K562 (cell line): ENCODE measurements at regions of chr19 and their contacts with region 1.

Region 1: DNA sequence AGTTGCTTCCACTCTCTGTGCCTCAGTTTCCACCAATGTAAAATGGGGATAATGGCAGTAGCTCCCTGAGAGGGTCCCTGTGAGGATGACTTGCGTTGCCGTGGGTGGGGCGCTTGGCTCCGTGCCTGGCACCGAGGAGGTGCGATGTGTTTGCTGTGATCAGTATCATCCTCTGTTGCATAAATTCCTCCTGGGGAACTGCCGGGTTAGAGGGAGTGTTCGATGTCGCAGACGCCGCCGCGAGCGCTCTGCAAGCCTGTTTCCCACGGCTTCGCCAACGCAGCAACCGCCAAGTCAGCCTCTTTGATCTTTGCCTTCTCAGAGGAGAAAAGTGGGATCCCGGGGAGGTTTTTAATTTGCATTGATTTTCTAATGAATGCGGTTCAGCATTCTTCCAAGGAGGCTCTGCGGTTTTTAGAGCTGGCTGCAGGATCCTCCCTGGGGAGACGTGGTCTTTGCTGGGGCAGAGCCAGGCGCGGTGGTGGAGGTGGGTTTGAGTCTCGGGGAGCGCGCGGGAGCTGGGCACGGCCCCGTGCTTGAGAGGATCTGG is 7.6 kb downstream of the GPR32 start:
- DNase-seq: peak in 1 of 4 experiments; percentile 55
- ATAC-seq: peak; percentile 59
- H3K4me3 ChIP-seq: 0 out of 2 replicates have a peak overlapping the region, but pooled peaks have one; percentile 4
- H3K27ac ChIP-seq: no peak overlapping the region
- H3K4me1 ChIP-seq: peaks cover 25 to 31% of the 10 kb centered on the region in 2 experiments; a peak in 4 of 5 replicates
- H3K27me3 ChIP-seq: no peaks in the 10 kb centered on the region
- CTCF ChIP-seq: no peak
- EP300 ChIP-seq: no peak
- POLR2A ChIP-seq: no peak
- RAD21 ChIP-seq: no peak

Region 2: GRCh38 chr19:50357178-50358100 is 420.4 kb before region 1 on chr19:
- CTCF ChIA-PET with region 1: no interaction called
- POLR2A ChIA-PET with region 1: no interaction called
- in situ Hi-C with region 1: loop called (anchors 10 kb)
- intact Hi-C with region 1: no loop called
- DNase-seq: peak; percentile 70 to 93 (median 78)
- ATAC-seq: peak; percentile 85
- H3K4me3 ChIP-seq: peak overlapping the region; percentile 43
- H3K27ac ChIP-seq: peak overlapping the region; percentile 95
- H3K4me1 ChIP-seq: peaks cover 36 to 38% of the 10 kb centered on the region in 2 experiments
- H3K27me3 ChIP-seq: no peaks in the 10 kb centered on the region
- CTCF ChIP-seq: peak; percentile 89 to 91 (median 90)
- EP300 ChIP-seq: no peak
- POLR2A ChIP-seq: peak; percentile 3
- RAD21 ChIP-seq: peak; percentile 86 to 91

Region 3: GRCh38 chr19:50537762-50538230 is 240.0 kb before region 1 on chr19:
- CTCF ChIA-PET with region 1: interaction called, 12 read pairs
- POLR2A ChIA-PET with region 1: no interaction called
- in situ Hi-C with region 1: loop called (anchors 5 kb)
- intact Hi-C with region 1: loop called (anchors 1 kb)
- DNase-seq: peak; percentile 87 to 93 (median 88)
- ATAC-seq: peak; percentile 99
- H3K4me3 ChIP-seq: no peak overlapping the region
- H3K27ac ChIP-seq: no peak overlapping the region
- H3K4me1 ChIP-seq: peaks cover 0 to 5% of the 10 kb centered on the region in 2 experiments; a peak in 2 of 5 replicates
- H3K27me3 ChIP-seq: peaks cover 0 to under 1% of the 10 kb centered on the region in 2 experiments; a peak in 1 of 5 replicates
- CTCF ChIP-seq: peak; percentile 97 to 99 (median 98)
- EP300 ChIP-seq: no peak
- POLR2A ChIP-seq: no peak
- RAD21 ChIP-seq: peak; percentile 85 to 96

Region 4: DNA sequence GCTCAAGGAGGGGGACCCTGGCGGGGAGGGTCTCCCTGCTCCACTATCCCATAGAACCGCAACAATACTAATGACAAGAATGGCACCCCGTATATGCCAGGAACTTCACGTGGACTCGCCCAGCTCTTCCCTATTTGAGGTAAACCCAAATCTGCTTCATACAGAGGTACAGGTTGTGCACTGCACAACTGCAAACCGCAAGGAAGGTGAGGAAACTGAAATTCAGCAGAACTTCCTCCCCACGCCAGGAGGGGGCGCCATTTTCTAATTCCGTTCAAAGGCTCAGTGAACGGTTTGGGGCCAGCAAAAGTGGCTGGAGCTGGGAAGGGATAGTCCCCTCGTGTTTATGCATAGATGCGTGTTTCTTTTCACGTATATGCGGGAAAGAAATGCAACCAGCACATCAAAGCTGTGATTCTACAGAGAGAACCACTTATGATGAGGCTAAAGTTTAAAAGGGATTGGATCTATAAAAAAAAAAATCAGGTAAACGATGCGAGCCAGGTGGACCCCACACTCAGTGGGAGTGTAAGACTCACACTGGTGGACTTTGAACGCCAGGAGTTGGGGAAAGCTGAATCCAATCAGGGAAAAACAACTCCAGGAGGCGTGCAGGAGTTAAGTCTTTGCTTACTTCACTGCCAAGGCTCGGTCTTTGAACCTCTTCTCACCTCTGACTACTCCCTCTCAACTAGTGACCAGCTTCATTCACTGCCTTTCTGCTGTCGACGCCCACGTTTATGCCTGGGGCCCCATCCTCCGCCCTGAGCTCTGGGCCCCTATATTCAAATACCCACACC is 108.3 kb before region 1 on chr19:
- CTCF ChIA-PET with region 1: interaction called, 11 read pairs
- POLR2A ChIA-PET with region 1: no interaction called
- in situ Hi-C with region 1: no loop called
- intact Hi-C with region 1: no loop called
- DNase-seq: peak; percentile 68 to 75 (median 70)
- ATAC-seq: peak; percentile 83
- H3K4me3 ChIP-seq: no peak overlapping the region
- H3K27ac ChIP-seq: no peak overlapping the region
- H3K4me1 ChIP-seq: peaks cover 0 to 32% of the 10 kb centered on the region in 2 experiments; a peak in 2 of 5 replicates
- H3K27me3 ChIP-seq: peaks cover 19 to 43% of the 10 kb centered on the region in 2 experiments
- CTCF ChIP-seq: peak; percentile 79 to 96 (median 88)
- EP300 ChIP-seq: no peak
- POLR2A ChIP-seq: no peak
- RAD21 ChIP-seq: peak; percentile 41 to 64; a peak in 3 of 4 replicates

Region 5: GRCh38 chr19:50753879-50754278 is 23.9 kb before region 1 on chr19:
- CTCF ChIA-PET with region 1: no interaction called
- POLR2A ChIA-PET with region 1: no interaction called
- in situ Hi-C with region 1: no loop called
- intact Hi-C with region 1: no loop called
- DNase-seq: no peak
- ATAC-seq: no peak
- H3K4me3 ChIP-seq: no peak overlapping the region
- H3K27ac ChIP-seq: no peak overlapping the region
- H3K4me1 ChIP-seq: peaks cover 2 to 4% of the 10 kb centered on the region in 2 experiments; a peak in 3 of 5 replicates
- H3K27me3 ChIP-seq: no peaks in the 10 kb centered on the region
- CTCF ChIP-seq: no peak
- EP300 ChIP-seq: no peak
- POLR2A ChIP-seq: no peak
- RAD21 ChIP-seq: no peak

Region 6: GRCh38 chr19:50794439-50795237 is 16.8 kb after region 1 on chr19:
- CTCF ChIA-PET with region 1: no interaction called
- POLR2A ChIA-PET with region 1: interaction called, 13 read pairs
- in situ Hi-C with region 1: no loop called
- intact Hi-C with region 1: no loop called
- DNase-seq: peak; percentile 77 to 84 (median 79)
- ATAC-seq: peak; percentile 69
- H3K4me3 ChIP-seq: no peak overlapping the region
- H3K27ac ChIP-seq: no peak overlapping the region
- H3K4me1 ChIP-seq: peaks cover 7 to 66% of the 10 kb centered on the region in 2 experiments; a peak in 4 of 5 replicates
- H3K27me3 ChIP-seq: no peaks in the 10 kb centered on the region
- CTCF ChIP-seq: peak; percentile 61 to 70 (median 65)
- EP300 ChIP-seq: no peak
- POLR2A ChIP-seq: no peak; the same call in 1 of the 2 replicates
- RAD21 ChIP-seq: peak; percentile 53 to 79

Region 7: DNA sequence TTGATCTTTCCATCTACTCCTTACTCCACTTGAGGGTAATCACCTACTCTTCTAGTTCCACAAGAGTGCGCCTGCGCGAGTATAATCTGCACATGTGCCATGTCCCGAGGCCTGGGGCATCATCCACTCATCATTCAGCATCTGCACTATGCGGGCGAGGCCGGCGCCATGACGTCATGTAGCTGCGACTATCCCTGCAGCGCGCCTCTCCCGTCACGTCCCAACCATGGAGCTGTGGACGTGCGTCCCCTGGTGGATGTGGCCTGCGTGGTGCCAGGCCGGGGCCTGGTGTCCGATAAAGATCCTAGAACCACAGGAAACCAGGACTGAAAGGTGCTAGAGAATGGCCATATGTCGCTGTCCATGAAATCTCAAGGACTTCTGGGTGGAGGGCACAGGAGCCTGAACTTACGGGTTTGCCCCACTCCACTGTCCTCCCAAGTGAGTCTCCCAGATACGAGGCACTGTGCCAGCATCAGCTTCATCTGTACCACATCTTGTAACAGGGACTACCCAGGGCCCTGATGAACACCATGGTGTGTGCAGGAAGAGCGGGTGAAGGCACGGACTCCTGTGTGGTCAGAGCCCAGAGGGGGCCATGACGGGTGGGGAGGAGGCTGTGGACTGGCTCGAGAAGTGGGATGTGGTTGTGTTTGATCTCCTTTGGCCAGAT is 92.7 kb after region 1 on chr19:
- CTCF ChIA-PET with region 1: no interaction called
- POLR2A ChIA-PET with region 1: no interaction called
- in situ Hi-C with region 1: no loop called
- intact Hi-C with region 1: no loop called
- DNase-seq: peak; percentile 93 to 94 (median 94)
- ATAC-seq: peak; percentile 99
- H3K4me3 ChIP-seq: no peak overlapping the region
- H3K27ac ChIP-seq: no peak overlapping the region; the same call in 2 of the 3 replicates
- H3K4me1 ChIP-seq: peaks cover 4 to 7% of the 10 kb centered on the region in 2 experiments; a peak in 4 of 5 replicates
- H3K27me3 ChIP-seq: peaks cover 13 to 30% of the 10 kb centered on the region in 2 experiments; a peak in 3 of 5 replicates
- CTCF ChIP-seq: peak; percentile 92 to 98 (median 98)
- EP300 ChIP-seq: peak; percentile 51; the same call in 1 of the 2 replicates
- POLR2A ChIP-seq: peak; percentile 42; the same call in 1 of the 2 replicates
- RAD21 ChIP-seq: peak; percentile 88 to 96